PC-3 (cell line): ENCODE measurements at regions of chr12 and their contacts with region 1.

Region 1: GRCh38 chr12:24728366-24728765 is 220.5 kb downstream of the BCAT1 start:
- DNase-seq: peak; percentile 11
- ATAC-seq: no peak
- H3K4me3 ChIP-seq: no peak overlapping the region
- H3K27ac ChIP-seq: no peak overlapping the region
- H3K4me1 ChIP-seq: no peaks in the 10 kb centered on the region
- H3K27me3 ChIP-seq: no peaks in the 10 kb centered on the region
- CTCF ChIP-seq: peak; percentile 42; the same call in 1 of the 2 replicates

Region 2: GRCh38 chr12:24109381-24110039 is 618.9 kb before region 1 on chr12:
- CTCF ChIA-PET with region 1: no interaction called
- POLR2A ChIA-PET with region 1: no interaction called
- intact Hi-C with region 1: loop called (anchors 5 kb)
- DNase-seq: peak; percentile 7
- ATAC-seq: no peak
- H3K4me3 ChIP-seq: no peak overlapping the region
- H3K27ac ChIP-seq: no peak overlapping the region
- H3K4me1 ChIP-seq: no peaks in the 10 kb centered on the region
- H3K27me3 ChIP-seq: 0 out of 2 replicates have a peak, but pooled peaks cover 3% of the 10 kb centered on the region
- CTCF ChIP-seq: peak; percentile 54